T-cell (primary cell): ENCODE measurements at regions of chr20 and their contacts with region 1.

Region 1: DNA sequence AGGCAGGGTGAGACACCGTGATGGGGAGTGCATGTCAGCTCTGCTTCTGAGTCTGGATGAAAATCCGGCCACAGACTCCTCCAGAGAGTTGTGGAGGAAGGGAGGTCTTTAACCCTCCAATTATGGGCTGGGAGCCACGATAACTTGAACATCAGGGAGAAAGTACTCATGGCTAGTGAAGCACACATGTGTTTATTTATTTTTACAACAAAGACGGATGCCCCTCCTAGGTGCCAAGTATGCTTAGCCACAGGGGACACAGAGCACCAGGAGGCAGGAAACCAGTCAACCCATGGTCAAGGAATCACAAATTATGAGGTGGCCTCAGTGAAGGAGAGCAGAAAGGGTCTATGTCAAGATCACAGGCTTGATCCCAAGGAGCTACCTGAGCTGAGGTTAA is 54.1 kb downstream of the ZNF217 start:
- DNase-seq: no peak
- ATAC-seq: no peak
- H3K4me3 ChIP-seq: no peak overlapping the region
- H3K4me3 Mint-ChIP-seq: no peak overlapping the region
- H3K27ac ChIP-seq: no peak overlapping the region
- H3K27ac Mint-ChIP-seq: no peak overlapping the region
- H3K4me1 ChIP-seq: no peaks in the 10 kb centered on the region
- H3K4me1 Mint-ChIP-seq: no peaks in the 10 kb centered on the region
- H3K27me3 ChIP-seq: no peaks in the 10 kb centered on the region
- H3K27me3 Mint-ChIP-seq: no peaks in the 10 kb centered on the region

Region 2: GRCh38 chr20:53524589-53525312 is 14.8 kb before region 1 on chr20:
- CTCF ChIA-PET with region 1: interaction called in 1 of 2 experiments, 10 read pairs
- POLR2A ChIA-PET with region 1: no interaction called
- DNase-seq: no peak
- ATAC-seq: no peak
- H3K4me3 ChIP-seq: no peak overlapping the region
- H3K4me3 Mint-ChIP-seq: no peak overlapping the region
- H3K27ac ChIP-seq: no peak overlapping the region
- H3K27ac Mint-ChIP-seq: no peak overlapping the region
- H3K4me1 ChIP-seq: no peaks in the 10 kb centered on the region
- H3K4me1 Mint-ChIP-seq: no peaks in the 10 kb centered on the region
- H3K27me3 ChIP-seq: peaks cover 0 to 5% of the 10 kb centered on the region in 2 experiments
- H3K27me3 Mint-ChIP-seq: no peaks in the 10 kb centered on the region

Region 3: DNA sequence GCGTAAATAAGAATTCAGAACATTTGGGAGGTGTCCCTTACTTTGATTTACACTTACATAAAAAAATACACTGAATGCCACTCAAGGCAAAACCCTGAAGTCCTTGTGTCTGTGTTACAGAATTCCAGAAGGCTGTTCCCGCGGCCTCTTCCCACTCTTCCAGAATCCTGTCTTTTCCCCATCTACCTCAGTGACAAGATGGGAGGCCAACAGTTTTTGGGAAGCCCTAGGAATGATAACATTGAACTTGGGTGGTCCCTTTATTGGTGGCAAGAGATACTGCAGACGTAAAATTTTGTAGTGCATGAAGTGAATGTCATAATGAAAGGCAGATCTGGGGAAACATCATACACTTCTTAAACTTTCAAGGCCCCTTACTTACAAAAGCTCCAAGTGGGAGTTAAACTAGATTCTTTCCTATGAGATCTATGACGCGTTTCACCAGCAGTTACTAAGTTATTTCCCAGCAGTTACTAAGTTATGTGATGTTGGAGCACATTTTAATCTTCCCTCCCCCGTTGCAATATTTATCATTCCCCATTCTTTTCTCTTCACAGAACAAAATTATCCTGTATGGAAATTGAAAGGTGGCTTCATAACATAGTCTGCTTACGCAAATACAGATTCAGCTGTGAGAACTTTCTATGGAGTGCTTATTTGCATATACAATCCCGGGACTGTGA is 451.4 kb after region 1 on chr20:
- CTCF ChIA-PET with region 1: no interaction called
- POLR2A ChIA-PET with region 1: no interaction called
- DNase-seq: no peak
- ATAC-seq: no peak
- H3K4me3 ChIP-seq: no peak overlapping the region
- H3K4me3 Mint-ChIP-seq: no peak overlapping the region
- H3K27ac ChIP-seq: no peak overlapping the region
- H3K27ac Mint-ChIP-seq: no peak overlapping the region
- H3K4me1 ChIP-seq: no peaks in the 10 kb centered on the region
- H3K4me1 Mint-ChIP-seq: peaks cover 0 to 4% (median 0%) of the 10 kb centered on the region in 3 donors
- H3K27me3 ChIP-seq: peaks cover 0 to 2% of the 10 kb centered on the region in 2 experiments
- H3K27me3 Mint-ChIP-seq: peaks cover 23 to 35% of the 10 kb centered on the region in 2 donors